ENCODE measurements at regions of chr7 and their contacts with region 1.

Region 1: GRCh38 chr7:24819916-24820689 is 62.8 kb upstream of the GSDME start:
- DNase-seq: peak; percentile 93
- H3K4me3 Mint-ChIP-seq: peak overlapping the region; percentile 66
- H3K27ac Mint-ChIP-seq: peak overlapping the region; percentile 99
- H3K4me1 Mint-ChIP-seq: peaks cover 39% of the 10 kb centered on the region
- H3K27me3 Mint-ChIP-seq: no peaks in the 10 kb centered on the region
- CTCF ChIP-seq: peak; percentile 77

Region 2: GRCh38 chr7:24882989-24883621 is 63.0 kb after region 1 on chr7:
- CTCF ChIA-PET with region 1: interaction called, 8 read pairs
- POLR2A ChIA-PET with region 1: interaction called, 11 read pairs
- intact Hi-C with region 1: no loop called
- DNase-seq: peak; percentile 73
- H3K4me3 Mint-ChIP-seq: no peak overlapping the region
- H3K27ac Mint-ChIP-seq: peak overlapping the region; percentile 3
- H3K4me1 Mint-ChIP-seq: peaks cover 11% of the 10 kb centered on the region
- H3K27me3 Mint-ChIP-seq: no peaks in the 10 kb centered on the region
- CTCF ChIP-seq: no peak

Region 3: GRCh38 chr7:24921362-24921679 is 101.2 kb after region 1 on chr7:
- CTCF ChIA-PET with region 1: interaction called, 3 read pairs
- POLR2A ChIA-PET with region 1: interaction called, 11 read pairs
- intact Hi-C with region 1: no loop called
- DNase-seq: peak; percentile 67
- H3K4me3 Mint-ChIP-seq: no peak overlapping the region
- H3K27ac Mint-ChIP-seq: peak overlapping the region; percentile 5
- H3K4me1 Mint-ChIP-seq: peaks cover 51% of the 10 kb centered on the region
- H3K27me3 Mint-ChIP-seq: no peaks in the 10 kb centered on the region
- CTCF ChIP-seq: no peak

Region 4: DNA sequence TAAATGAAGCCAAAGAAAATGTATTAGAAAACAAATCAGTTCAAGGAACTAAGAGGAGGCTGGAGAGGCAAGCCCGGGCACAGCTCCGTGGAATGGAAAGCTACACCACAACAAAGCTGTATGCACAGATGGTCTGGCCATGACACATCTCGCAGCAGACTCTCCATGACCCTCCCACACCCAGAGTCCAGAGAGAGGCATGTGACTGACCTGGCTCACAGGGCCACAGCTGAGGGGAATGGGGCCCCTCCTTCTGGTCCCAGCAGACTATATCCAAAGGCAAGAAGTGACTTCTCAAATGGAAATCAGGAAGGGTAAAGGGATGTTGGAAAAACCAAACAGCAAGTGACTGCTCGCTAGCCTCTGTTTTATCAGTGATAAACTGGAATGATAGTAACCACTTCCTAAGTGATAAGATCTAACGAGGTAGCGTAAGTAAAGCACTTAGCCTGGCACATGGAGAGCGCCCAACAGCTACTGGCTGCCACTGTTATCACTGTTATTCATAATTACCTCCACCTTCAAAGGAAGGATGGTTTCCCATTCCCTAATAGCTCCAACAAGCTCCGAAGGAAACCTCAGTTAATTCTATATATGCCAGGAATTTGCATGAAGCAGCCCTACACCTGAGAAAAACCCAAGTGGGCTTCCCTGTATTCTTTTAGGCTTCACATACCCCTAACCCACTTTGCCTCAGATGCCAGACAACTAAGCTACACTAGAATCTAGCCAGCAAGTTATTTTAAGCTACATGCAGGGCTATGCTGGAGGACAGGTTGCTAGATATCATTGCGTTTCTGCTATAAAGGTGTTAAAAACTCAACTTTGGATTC is 151.4 kb after region 1 on chr7:
- CTCF ChIA-PET with region 1: interaction called, 104 read pairs
- POLR2A ChIA-PET with region 1: interaction called, 163 read pairs
- intact Hi-C with region 1: loop called (anchors 2 kb)
- DNase-seq: peak; percentile 85
- H3K4me3 Mint-ChIP-seq: peak overlapping the region; percentile 38
- H3K27ac Mint-ChIP-seq: peak overlapping the region; percentile 99
- H3K4me1 Mint-ChIP-seq: peaks cover 62% of the 10 kb centered on the region
- H3K27me3 Mint-ChIP-seq: no peaks in the 10 kb centered on the region
- CTCF ChIP-seq: no peak